Endothelial cell of umbilical vein (primary cell): ENCODE measurements at regions of chr9 and their contacts with region 1.

Region 1: DNA sequence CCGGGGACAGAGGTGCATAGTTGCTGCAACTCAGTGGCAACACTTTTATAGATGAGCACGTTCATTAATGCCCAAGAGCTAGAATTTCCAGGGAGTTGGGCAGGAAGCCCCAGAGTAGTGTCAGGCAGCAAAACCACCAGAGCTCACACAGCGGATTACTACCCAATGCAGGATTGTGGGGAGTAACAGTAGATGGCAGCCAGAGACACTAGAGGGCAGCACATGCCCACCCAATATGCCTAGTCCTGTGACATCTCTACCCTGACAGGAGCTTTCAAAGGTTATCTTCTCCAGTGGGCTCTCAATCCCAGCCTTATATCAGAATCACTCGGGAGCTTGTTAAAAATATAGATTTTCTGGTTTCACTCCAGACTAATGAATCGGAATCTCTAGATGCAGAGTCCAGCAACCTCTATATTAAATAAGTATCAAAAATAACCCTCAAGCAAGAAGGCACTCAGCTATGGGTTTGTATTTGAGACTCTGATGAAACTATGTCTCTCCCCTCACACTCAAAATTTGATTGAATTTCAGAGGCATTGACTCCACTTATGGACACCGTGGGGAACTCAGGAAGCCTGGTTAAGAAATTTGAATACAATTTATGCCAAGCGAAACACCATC is 58.4 kb upstream of the PHF24 start:
- DNase-seq: peak; percentile 77
- H3K4me3 ChIP-seq: no peak overlapping the region
- H3K27ac ChIP-seq: no peak overlapping the region
- H3K4me1 ChIP-seq: no peaks in the 10 kb centered on the region
- H3K27me3 ChIP-seq: peaks cover 24 to 37% of the 10 kb centered on the region in 2 experiments
- CTCF ChIP-seq: peak; percentile 64 to 85
- POLR2A ChIP-seq: no peak

Region 2: DNA sequence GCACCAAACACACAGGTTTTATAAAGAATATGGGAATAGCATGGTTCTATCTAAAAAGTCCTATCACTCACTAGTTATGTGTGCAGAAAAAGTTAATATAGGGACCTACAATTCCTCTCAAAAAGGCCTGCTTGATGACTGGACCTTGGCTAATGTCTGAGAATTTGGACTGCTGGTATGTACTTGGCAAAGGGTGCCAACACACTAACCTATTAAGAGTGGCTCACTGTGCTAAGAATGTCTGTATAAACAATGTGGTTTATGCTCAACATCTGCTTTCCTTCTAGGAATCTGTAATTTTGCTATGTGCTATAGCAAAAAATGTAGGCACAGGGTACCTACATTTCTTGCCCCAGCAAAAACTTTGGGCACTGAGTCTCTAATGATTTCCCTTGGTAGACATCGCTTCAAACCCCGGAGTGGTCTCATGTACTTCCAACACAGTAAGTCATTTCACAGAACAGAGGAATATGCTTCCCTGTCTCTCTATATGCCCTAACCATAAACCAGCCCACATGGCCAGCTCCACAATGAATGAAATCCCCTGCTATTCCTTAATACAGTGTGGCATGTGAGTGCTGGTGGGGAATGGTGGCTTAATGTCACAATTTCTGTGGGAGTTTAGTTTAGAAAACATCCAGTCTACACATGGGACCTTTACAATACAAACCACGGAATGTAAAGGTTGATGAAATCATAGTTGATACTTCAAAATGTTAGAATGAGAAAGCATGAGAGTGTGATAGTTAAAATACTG is 952.7 kb before region 1 on chr9:
- CTCF ChIA-PET with region 1: no interaction called
- POLR2A ChIA-PET with region 1: no interaction called
- dilution Hi-C with region 1: no loop called
- intact Hi-C with region 1: no loop called
- DNase-seq: peak; percentile 58
- H3K4me3 ChIP-seq: no peak overlapping the region
- H3K27ac ChIP-seq: peak overlapping the region; percentile 39
- H3K4me1 ChIP-seq: peaks cover 24% of the 10 kb centered on the region
- H3K27me3 ChIP-seq: no peaks in the 10 kb centered on the region
- CTCF ChIP-seq: no peak
- POLR2A ChIP-seq: no peak

Region 3: DNA sequence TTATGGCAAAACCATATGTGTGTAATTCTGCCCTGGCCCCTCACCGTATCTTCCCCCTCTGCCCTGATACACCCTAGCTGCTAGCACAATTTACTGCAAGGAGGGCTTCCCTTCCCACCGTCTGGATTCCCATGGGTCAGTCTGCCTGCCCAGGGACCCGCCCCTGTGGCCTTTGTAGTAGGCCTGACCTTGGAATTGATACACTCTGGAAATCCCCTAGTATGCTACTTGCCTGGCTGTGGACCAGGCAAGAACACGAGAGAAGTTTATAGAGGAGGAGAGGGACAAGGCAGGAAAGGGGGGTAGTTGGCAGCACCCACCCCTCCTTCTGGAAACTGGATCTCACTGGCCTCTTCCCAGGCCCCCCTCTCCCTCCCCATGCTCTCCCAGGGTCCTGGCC is 73.9 kb before region 1 on chr9:
- CTCF ChIA-PET with region 1: no interaction called
- POLR2A ChIA-PET with region 1: no interaction called
- dilution Hi-C with region 1: no loop called
- intact Hi-C with region 1: no loop called
- DNase-seq: no peak
- H3K4me3 ChIP-seq: no peak overlapping the region
- H3K27ac ChIP-seq: no peak overlapping the region
- H3K4me1 ChIP-seq: no peaks in the 10 kb centered on the region
- H3K27me3 ChIP-seq: peaks cover 8 to 9% of the 10 kb centered on the region in 2 experiments
- CTCF ChIP-seq: no peak
- POLR2A ChIP-seq: no peak

Region 4: GRCh38 chr9:34989003-34989945 is 89.6 kb after region 1 on chr9 and contains the start of gene DNAJB5:
- CTCF ChIA-PET with region 1: interaction called, 174 read pairs
- POLR2A ChIA-PET with region 1: interaction called, 4 read pairs
- dilution Hi-C with region 1: no loop called
- intact Hi-C with region 1: loop called (anchors 1 kb)
- DNase-seq: peak; percentile 100
- H3K4me3 ChIP-seq: peak within 1 kb of the TSS; percentile 47 to 88 (median 60)
- H3K27ac ChIP-seq: peak within 1 kb of the TSS; percentile 79
- H3K4me1 ChIP-seq: peaks cover 40% of the 10 kb centered on the region
- H3K27me3 ChIP-seq: no peaks in the 10 kb centered on the region
- CTCF ChIP-seq: no peak
- POLR2A ChIP-seq: peak; percentile 67
- total RNA-seq, gene DNAJB5: 9.7 and 12.8 TPM in 2 replicates

Region 5: GRCh38 chr9:35042081-35042604 is 142.5 kb after region 1 on chr9:
- CTCF ChIA-PET with region 1: interaction called, 26 read pairs
- POLR2A ChIA-PET with region 1: no interaction called
- dilution Hi-C with region 1: no loop called
- intact Hi-C with region 1: loop called (anchors 5 kb)
- DNase-seq: no peak
- H3K4me3 ChIP-seq: no peak overlapping the region
- H3K27ac ChIP-seq: no peak overlapping the region
- H3K4me1 ChIP-seq: no peaks in the 10 kb centered on the region
- H3K27me3 ChIP-seq: no peaks in the 10 kb centered on the region
- CTCF ChIP-seq: no peak
- POLR2A ChIP-seq: no peak

Region 6: GRCh38 chr9:35079426-35080341 is 180.0 kb after region 1 on chr9 and contains the start of gene FANCG:
- CTCF ChIA-PET with region 1: interaction called, 22 read pairs
- POLR2A ChIA-PET with region 1: no interaction called
- dilution Hi-C with region 1: no loop called
- intact Hi-C with region 1: no loop called
- DNase-seq: peak; percentile 95
- H3K4me3 ChIP-seq: peak within 1 kb of the TSS; percentile 64 to 79 (median 66)
- H3K27ac ChIP-seq: peak within 1 kb of the TSS; percentile 57
- H3K4me1 ChIP-seq: peaks cover 16% of the 10 kb centered on the region
- H3K27me3 ChIP-seq: no peaks in the 10 kb centered on the region
- CTCF ChIP-seq: no peak
- POLR2A ChIP-seq: peak; percentile 76
- total RNA-seq, gene FANCG: 50.0 and 58.0 TPM in 2 replicates

Region 7: DNA sequence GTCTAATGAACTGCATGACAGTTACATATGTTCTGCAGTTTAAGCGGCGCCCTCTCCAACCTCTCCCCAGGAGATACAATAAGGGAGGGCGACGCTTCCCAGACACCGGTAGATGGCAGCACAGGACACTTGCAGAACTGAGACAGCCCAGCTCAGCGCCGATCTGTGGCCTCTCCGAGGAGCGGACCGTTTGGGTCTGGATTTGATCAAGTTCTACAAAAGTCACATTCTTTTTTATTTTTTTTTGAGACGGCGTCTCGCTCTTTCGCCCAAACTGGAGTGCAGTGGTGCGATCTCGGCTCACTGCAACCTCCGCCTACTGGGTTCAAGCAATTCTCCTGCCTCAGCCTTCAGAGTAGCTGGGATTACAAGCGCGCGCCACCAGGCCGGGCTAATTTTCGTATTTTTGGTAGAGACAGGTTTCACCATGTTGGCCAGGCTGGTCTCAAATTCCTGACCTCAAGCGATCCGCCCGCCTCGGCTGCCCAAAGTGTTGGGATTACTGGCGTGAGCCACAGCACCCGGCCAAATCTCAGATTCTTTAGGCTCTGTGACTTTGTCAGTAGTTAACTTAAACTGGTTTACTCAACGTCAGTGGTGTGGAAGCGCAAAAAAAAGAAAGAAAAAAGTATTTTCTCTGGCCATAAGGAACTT is 217.4 kb after region 1 on chr9:
- CTCF ChIA-PET with region 1: interaction called, 16 read pairs
- POLR2A ChIA-PET with region 1: no interaction called
- dilution Hi-C with region 1: no loop called
- intact Hi-C with region 1: loop called (anchors 5 kb)
- DNase-seq: peak; percentile 88
- H3K4me3 ChIP-seq: peak overlapping the region in 2 of 3 experiments; percentile 53 to 67
- H3K27ac ChIP-seq: no peak overlapping the region
- H3K4me1 ChIP-seq: peaks cover 31% of the 10 kb centered on the region
- H3K27me3 ChIP-seq: no peaks in the 10 kb centered on the region
- CTCF ChIP-seq: peak; percentile 92
- POLR2A ChIP-seq: no peak

Region 8: GRCh38 chr9:35553670-35554543 is 654.3 kb after region 1 on chr9:
- CTCF ChIA-PET with region 1: interaction called, 11 read pairs
- POLR2A ChIA-PET with region 1: no interaction called
- dilution Hi-C with region 1: no loop called
- intact Hi-C with region 1: no loop called
- DNase-seq: peak; percentile 76
- H3K4me3 ChIP-seq: no peak overlapping the region
- H3K27ac ChIP-seq: peak overlapping the region; percentile 24
- H3K4me1 ChIP-seq: peaks cover 6% of the 10 kb centered on the region
- H3K27me3 ChIP-seq: no peaks in the 10 kb centered on the region
- CTCF ChIP-seq: peak; percentile 76 to 79
- POLR2A ChIP-seq: no peak